ENCODE measurements at regions of chr9 and their contacts with region 1.

Region 1: GRCh38 chr9:87157366-87158031 is 210.2 kb upstream of the GAS1 start:
- ATAC-seq: no peak
- H3K4me3 ChIP-seq: no peak overlapping the region
- H3K27ac ChIP-seq: no peak overlapping the region
- H3K4me1 ChIP-seq: no peaks in the 10 kb centered on the region

Region 2: GRCh38 chr9:87063871-87064270 is 93.6 kb before region 1 on chr9:
- in situ Hi-C with region 1: loop called in 1 of 9 experiments (anchors 25 kb)
- ATAC-seq: no peak
- H3K4me3 ChIP-seq: no peak overlapping the region
- H3K27ac ChIP-seq: no peak overlapping the region
- H3K4me1 ChIP-seq: no peaks in the 10 kb centered on the region

Measured in motor neuron (in vitro differentiated cells).